Breast epithelium (tissue), 4 donors: ENCODE measurements at regions of chr11 and their contacts with region 1.

Region 1: DNA sequence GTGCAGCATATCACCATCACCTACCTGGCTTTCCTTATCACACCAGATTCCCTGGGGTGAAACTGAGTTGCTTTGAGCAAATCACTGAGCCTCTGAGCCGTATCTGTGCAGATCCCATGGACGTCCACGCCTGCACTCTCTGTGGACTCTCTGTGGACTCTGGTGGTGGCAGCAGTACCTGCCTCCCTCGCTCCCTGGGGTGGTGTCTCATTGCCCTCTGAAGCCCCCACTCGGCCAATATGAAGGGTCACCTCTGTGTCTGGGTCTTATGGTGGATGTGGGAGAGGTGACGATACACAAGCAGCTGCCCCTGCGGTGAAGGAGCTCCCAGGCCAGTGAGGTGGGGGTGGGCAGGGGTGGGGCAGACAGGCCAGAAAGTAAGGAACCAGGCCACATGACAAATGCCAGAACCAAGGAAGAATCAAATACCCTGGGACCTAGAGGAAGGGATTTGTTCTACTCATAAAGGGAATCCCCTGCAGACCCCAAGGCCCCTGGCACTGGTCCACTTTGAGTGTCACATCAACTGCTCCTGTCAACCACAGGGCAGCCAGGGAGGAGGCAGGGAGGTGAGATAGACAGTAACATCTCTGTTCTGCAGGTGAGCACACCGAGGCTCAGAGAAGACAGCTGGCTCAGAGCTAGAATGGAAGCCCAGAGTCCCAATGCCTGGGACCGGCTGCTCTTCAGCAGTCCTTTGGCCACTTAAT is 9.2 kb upstream of the CHST1 start:
- DNase-seq: no peak
- H3K4me3 ChIP-seq: no peak overlapping the region
- H3K27ac ChIP-seq: no peak overlapping the region
- H3K4me1 ChIP-seq: no peaks in the 10 kb centered on the region
- H3K27me3 ChIP-seq: no peaks in the 10 kb centered on the region
- CTCF ChIP-seq: no peak
- POLR2A ChIP-seq: no peak

Region 2: GRCh38 chr11:44475114-44475686 is 1199.4 kb before region 1 on chr11:
- intact Hi-C with region 1: no loop called
- DNase-seq: no peak
- H3K4me3 ChIP-seq: no peak overlapping the region
- H3K27ac ChIP-seq: no peak overlapping the region
- H3K4me1 ChIP-seq: no peaks in the 10 kb centered on the region
- H3K27me3 ChIP-seq: no peaks in the 10 kb centered on the region
- CTCF ChIP-seq: no peak
- POLR2A ChIP-seq: no peak

Region 3: GRCh38 chr11:45641961-45642360 is 32.7 kb before region 1 on chr11:
- intact Hi-C with region 1: loop called (anchors 1 kb)
- DNase-seq: no peak
- H3K4me3 ChIP-seq: no peak overlapping the region
- H3K27ac ChIP-seq: no peak overlapping the region
- H3K4me1 ChIP-seq: no peaks in the 10 kb centered on the region
- H3K27me3 ChIP-seq: peaks cover 0 to 4% of the 10 kb centered on the region in 2 donors
- CTCF ChIP-seq: no peak
- POLR2A ChIP-seq: no peak

Region 4: DNA sequence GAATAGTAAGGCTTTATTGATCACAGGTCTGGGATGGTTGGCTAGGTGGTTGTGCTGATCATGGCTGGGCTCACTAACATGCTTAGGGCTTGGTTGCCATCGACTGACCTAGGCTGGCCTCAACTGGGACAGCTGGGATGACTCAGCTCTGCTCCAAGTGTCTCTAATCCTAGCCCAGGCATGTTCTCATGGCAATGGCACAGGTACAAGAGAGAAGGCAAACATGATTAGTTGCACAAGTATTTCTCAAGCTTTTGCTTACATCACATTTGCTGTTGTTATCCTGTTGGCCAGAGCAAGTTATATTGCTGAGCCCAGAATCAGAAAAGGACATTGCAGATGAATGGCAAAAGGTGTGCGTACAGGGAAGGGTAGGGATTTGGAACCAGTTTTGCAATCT is 61.8 kb after region 1 on chr11:
- intact Hi-C with region 1: no loop called
- DNase-seq: peak in 1 of 2 donors; percentile 20
- H3K4me3 ChIP-seq: no peak overlapping the region
- H3K27ac ChIP-seq: no peak overlapping the region
- H3K4me1 ChIP-seq: no peaks in the 10 kb centered on the region
- H3K27me3 ChIP-seq: no peaks in the 10 kb centered on the region
- CTCF ChIP-seq: no peak
- POLR2A ChIP-seq: no peak